Panc1 (cell line): ENCODE measurements at regions of chr5 and their contacts with region 1.

Region 1: DNA sequence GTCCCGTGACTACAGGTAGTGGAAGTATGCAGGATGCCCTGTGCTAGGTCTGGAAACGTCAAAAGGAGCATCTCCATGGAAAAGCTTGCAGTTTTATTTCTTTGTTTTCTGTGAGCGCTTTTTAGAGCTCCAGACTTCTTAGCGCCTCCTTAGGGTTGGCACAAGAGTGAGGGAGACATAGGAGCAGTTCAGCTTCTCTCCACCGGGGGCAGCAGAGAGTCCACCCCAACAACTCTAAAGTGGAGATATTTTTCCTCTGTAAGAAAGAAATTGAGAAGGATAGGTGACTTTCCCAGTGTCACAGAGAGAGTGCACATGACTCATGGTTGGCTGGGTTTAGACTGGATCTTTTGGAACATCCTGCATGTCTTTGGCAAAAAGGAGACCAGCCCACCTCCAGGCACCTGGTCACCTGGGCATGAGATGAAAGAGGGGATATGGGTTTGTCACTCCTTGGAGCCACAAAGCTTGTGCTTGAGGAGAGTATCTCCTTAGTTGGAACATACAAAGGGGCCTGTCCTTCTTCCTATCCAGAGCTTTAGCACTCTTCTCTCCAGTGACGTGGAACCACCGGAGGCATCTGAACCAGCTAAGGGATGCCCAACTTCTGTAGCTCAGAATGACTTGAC is 637.7 kb downstream of the SEMA5A start:
- DNase-seq: peak; percentile 35
- ATAC-seq: peak; percentile 45; the same call in 1 of the 2 replicates
- H3K4me3 ChIP-seq: no peak overlapping the region
- H3K27ac ChIP-seq: no peak overlapping the region
- H3K4me1 ChIP-seq: no peaks in the 10 kb centered on the region
- H3K27me3 ChIP-seq: no peaks in the 10 kb centered on the region
- CTCF ChIP-seq: peak; percentile 84

Region 2: DNA sequence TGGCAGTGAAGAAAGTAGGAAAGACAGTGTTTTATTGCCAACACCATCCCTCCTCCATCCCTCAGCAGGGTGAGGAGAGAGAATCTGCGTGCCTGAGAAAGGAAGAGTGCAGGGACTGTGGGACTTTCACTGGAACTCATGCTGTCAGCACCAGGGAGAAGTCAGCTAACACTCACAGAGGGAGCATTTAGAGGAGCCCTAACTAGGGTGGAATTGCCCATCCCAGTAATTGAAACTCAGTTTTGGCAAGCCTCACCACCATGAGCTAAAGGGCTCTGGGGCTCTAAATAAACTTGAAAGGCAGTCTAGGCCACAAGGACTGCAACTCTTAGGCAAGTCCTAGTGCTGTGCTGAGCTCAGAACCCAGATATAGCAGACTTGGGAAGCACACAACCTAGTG is 15.4 kb after region 1 on chr5:
- CTCF ChIA-PET with region 1: interaction called, 4 read pairs
- POLR2A ChIA-PET with region 1: interaction called, 11 read pairs
- in situ Hi-C with region 1: no loop called
- intact Hi-C with region 1: no loop called
- DNase-seq: no peak
- ATAC-seq: no peak
- H3K4me3 ChIP-seq: no peak overlapping the region
- H3K27ac ChIP-seq: no peak overlapping the region
- H3K4me1 ChIP-seq: no peaks in the 10 kb centered on the region
- H3K27me3 ChIP-seq: no peaks in the 10 kb centered on the region
- CTCF ChIP-seq: no peak

Region 3: GRCh38 chr5:9182899-9183685 is 274.9 kb after region 1 on chr5:
- CTCF ChIA-PET with region 1: interaction called, 11 read pairs
- POLR2A ChIA-PET with region 1: no interaction called
- in situ Hi-C with region 1: no loop called
- intact Hi-C with region 1: no loop called
- DNase-seq: no peak
- ATAC-seq: no peak
- H3K4me3 ChIP-seq: no peak overlapping the region
- H3K27ac ChIP-seq: no peak overlapping the region
- H3K4me1 ChIP-seq: no peaks in the 10 kb centered on the region
- H3K27me3 ChIP-seq: no peaks in the 10 kb centered on the region
- CTCF ChIP-seq: no peak

Region 4: DNA sequence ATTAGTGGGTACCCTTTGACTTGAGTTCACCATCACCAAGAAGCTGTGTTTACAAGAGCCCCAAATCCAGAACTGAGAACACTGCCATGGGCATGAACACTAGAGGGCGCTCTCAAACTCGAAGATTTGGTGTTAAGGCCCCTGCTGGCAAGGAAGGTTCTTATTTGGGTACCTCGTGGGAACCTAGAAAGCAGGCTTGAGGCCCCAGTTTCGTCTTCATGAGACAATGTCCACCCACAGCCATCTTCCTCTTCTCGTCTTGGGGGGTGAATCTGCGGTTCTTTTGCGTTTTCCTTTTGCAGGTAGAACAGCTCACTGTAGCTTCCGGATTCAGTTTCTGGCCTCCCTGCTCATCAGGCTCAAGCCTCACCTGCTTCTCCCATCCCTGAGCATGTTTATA is 453.7 kb after region 1 on chr5:
- CTCF ChIA-PET with region 1: no interaction called
- POLR2A ChIA-PET with region 1: no interaction called
- in situ Hi-C with region 1: no loop called
- intact Hi-C with region 1: no loop called
- DNase-seq: peak; percentile 33
- ATAC-seq: no peak
- H3K4me3 ChIP-seq: no peak overlapping the region
- H3K27ac ChIP-seq: no peak overlapping the region
- H3K4me1 ChIP-seq: no peaks in the 10 kb centered on the region
- H3K27me3 ChIP-seq: no peaks in the 10 kb centered on the region
- CTCF ChIP-seq: peak; percentile 71

Region 5: DNA sequence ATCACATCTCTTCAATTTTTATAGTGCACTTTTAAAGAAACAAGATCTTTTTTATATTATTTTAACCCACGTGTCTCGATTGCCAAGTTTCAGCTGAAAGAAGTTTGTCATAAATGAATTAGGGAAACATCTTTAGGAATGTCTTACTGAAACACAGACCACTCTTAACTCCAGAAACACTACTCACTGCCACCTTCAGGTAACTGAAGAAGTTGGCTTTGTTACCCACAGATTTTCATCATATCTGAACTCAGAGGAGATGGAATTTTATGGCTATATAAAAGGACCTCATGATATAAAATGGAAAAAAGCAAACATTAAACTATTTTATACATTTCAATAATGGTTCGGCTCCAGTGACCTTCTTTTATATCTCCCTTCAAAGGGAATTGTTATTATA is 479.7 kb after region 1 on chr5:
- CTCF ChIA-PET with region 1: no interaction called
- POLR2A ChIA-PET with region 1: no interaction called
- in situ Hi-C with region 1: no loop called
- intact Hi-C with region 1: no loop called
- DNase-seq: no peak
- ATAC-seq: no peak
- H3K4me3 ChIP-seq: no peak overlapping the region
- H3K27ac ChIP-seq: no peak overlapping the region
- H3K4me1 ChIP-seq: no peaks in the 10 kb centered on the region
- H3K27me3 ChIP-seq: no peaks in the 10 kb centered on the region
- CTCF ChIP-seq: peak; percentile 4; the same call in 1 of the 2 replicates